ENCODE measurements at regions of chr9 and their contacts with region 1.

Region 1: GRCh38 chr9:129495534-129496325 is 125.2 kb downstream of the C9orf50 start:
- DNase-seq: peak; percentile 97
- ATAC-seq: peak; percentile 77
- H3K4me3 Mint-ChIP-seq: peak overlapping the region; percentile 89
- H3K27ac Mint-ChIP-seq: peak overlapping the region; percentile 74; the same call in 1 of the 2 replicates
- H3K4me1 Mint-ChIP-seq: peaks cover 58% of the 10 kb centered on the region
- H3K27me3 Mint-ChIP-seq: peaks cover 61% of the 10 kb centered on the region
- CTCF ChIP-seq: no peak

Region 2: GRCh38 chr9:129394061-129394885 is 101.5 kb before region 1 on chr9:
- CTCF ChIA-PET with region 1: no interaction called
- POLR2A ChIA-PET with region 1: no interaction called
- DNase-seq: no peak
- ATAC-seq: no peak
- H3K4me3 Mint-ChIP-seq: no peak overlapping the region
- H3K27ac Mint-ChIP-seq: no peak overlapping the region
- H3K4me1 Mint-ChIP-seq: peaks cover 17% of the 10 kb centered on the region
- H3K27me3 Mint-ChIP-seq: no peaks in the 10 kb centered on the region; the same call in 1 of the 2 replicates
- CTCF ChIP-seq: no peak

Region 3: GRCh38 chr9:129460323-129461261 is 35.1 kb before region 1 on chr9:
- CTCF ChIA-PET with region 1: interaction called, 7 read pairs
- POLR2A ChIA-PET with region 1: interaction called, 12 read pairs
- DNase-seq: peak; percentile 82
- ATAC-seq: peak; percentile 69
- H3K4me3 Mint-ChIP-seq: peak overlapping the region; percentile 76
- H3K27ac Mint-ChIP-seq: no peak overlapping the region
- H3K4me1 Mint-ChIP-seq: peaks cover 23% of the 10 kb centered on the region
- H3K27me3 Mint-ChIP-seq: peaks cover 22% of the 10 kb centered on the region
- CTCF ChIP-seq: no peak

Region 4: GRCh38 chr9:129482521-129483414 is 13.0 kb before region 1 on chr9:
- CTCF ChIA-PET with region 1: interaction called, 18 read pairs
- POLR2A ChIA-PET with region 1: interaction called, 11 read pairs
- DNase-seq: no peak
- ATAC-seq: peak; percentile 3; the same call in 1 of the 2 replicates
- H3K4me3 Mint-ChIP-seq: peak overlapping the region; percentile 67
- H3K27ac Mint-ChIP-seq: no peak overlapping the region
- H3K4me1 Mint-ChIP-seq: peaks cover 37% of the 10 kb centered on the region
- H3K27me3 Mint-ChIP-seq: peaks cover 85% of the 10 kb centered on the region
- CTCF ChIP-seq: no peak

Region 5: DNA sequence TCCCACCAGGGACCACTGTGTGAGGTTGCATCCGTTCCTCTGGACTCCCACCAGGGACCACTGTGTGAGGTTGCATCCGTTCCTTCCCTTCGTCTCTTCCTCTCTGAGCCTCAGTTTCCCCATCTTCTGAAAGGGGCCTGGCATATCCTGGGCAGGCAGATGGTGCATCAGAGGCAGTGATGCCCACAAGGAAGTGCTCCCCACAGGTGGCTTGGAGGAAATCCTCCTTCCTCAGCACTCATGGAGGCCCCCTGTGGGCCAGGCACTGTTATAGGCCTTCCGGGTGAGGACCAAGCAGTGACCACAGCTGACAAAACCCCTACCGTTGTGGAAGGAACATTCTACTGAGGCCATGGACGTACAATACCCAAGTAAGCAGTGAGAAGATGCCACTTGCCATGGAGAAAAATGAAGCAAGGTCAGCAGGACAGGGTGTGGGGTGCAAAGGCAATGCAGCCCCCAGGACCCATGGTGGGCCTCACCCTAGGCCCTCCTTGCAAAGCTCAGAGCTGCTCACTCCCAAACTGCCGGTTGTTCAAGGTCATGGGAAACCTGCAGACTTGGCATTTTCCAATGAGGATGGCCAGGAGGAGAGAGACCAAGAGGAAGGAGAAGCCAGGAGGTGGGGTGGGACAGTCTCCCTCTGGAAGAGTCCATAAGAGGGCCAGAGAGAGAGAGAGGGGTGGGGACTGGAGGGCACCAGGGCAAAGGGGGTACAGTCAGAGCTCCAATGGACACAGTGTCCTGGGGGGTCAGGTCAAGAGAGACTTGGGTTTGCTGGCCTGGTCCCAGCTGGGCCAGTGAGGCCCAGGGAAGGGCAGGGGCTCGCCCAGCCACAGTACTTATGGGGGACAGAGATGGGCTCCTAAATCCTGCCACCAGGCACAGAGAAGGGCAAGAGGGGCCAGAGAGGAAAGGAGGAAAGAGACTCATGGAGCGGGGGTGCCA is 74.0 kb after region 1 on chr9:
- CTCF ChIA-PET with region 1: interaction called, 16 read pairs
- POLR2A ChIA-PET with region 1: no interaction called
- DNase-seq: no peak
- ATAC-seq: peak; percentile 11; the same call in 1 of the 2 replicates
- H3K4me3 Mint-ChIP-seq: peak overlapping the region; percentile 78
- H3K27ac Mint-ChIP-seq: no peak overlapping the region
- H3K4me1 Mint-ChIP-seq: peaks cover 30% of the 10 kb centered on the region
- H3K27me3 Mint-ChIP-seq: peaks cover 17% of the 10 kb centered on the region
- CTCF ChIP-seq: no peak

Region 6: GRCh38 chr9:129597355-129598088 is 101.8 kb after region 1 on chr9:
- CTCF ChIA-PET with region 1: interaction called, 12 read pairs
- POLR2A ChIA-PET with region 1: interaction called, 8 read pairs
- DNase-seq: peak; percentile 74
- ATAC-seq: peak; percentile 29
- H3K4me3 Mint-ChIP-seq: peak overlapping the region; percentile 56
- H3K27ac Mint-ChIP-seq: no peak overlapping the region
- H3K4me1 Mint-ChIP-seq: peaks cover 44% of the 10 kb centered on the region
- H3K27me3 Mint-ChIP-seq: peaks cover 52% of the 10 kb centered on the region
- CTCF ChIP-seq: no peak

Region 7: GRCh38 chr9:129610473-129611301 is 115.0 kb after region 1 on chr9:
- CTCF ChIA-PET with region 1: interaction called, 14 read pairs
- POLR2A ChIA-PET with region 1: interaction called, 4 read pairs
- DNase-seq: peak; percentile 94
- ATAC-seq: peak; percentile 61
- H3K4me3 Mint-ChIP-seq: peak overlapping the region; percentile 72
- H3K27ac Mint-ChIP-seq: peak overlapping the region; percentile 74; the same call in 1 of the 2 replicates
- H3K4me1 Mint-ChIP-seq: peaks cover 24% of the 10 kb centered on the region
- H3K27me3 Mint-ChIP-seq: peaks cover 11% of the 10 kb centered on the region
- CTCF ChIP-seq: peak; percentile 92

Region 8: GRCh38 chr9:129752915-129753729 is 257.4 kb after region 1 on chr9 and contains the start of gene PTGES:
- CTCF ChIA-PET with region 1: no interaction called
- POLR2A ChIA-PET with region 1: no interaction called
- DNase-seq: peak; percentile 65
- ATAC-seq: peak; percentile 92
- H3K4me3 Mint-ChIP-seq: peak within 1 kb of the TSS; percentile 45
- H3K27ac Mint-ChIP-seq: no peak within 1 kb of the TSS
- H3K4me1 Mint-ChIP-seq: peaks cover 15% of the 10 kb centered on the region
- H3K27me3 Mint-ChIP-seq: no peaks in the 10 kb centered on the region
- CTCF ChIP-seq: no peak
- total RNA-seq, gene PTGES: 2.5 to 4.4 TPM (median 3.2 TPM) in 3 replicates

Measured in WTC11 (cell line).